Gastrocnemius medialis (tissue), 4 donors: ENCODE measurements at regions of chr1 and their contacts with region 1.

Region 1: GRCh38 chr1:85576642-85577418 is 3.7 kb upstream of the CCN1 start:
- DNase-seq: peak; percentile 66 to 78
- ATAC-seq: peak; percentile 44 to 63
- H3K4me3 ChIP-seq: peak overlapping the region; percentile 72 to 90 (median 80)
- H3K27ac ChIP-seq: peak overlapping the region; percentile 91 to 97 (median 94)
- H3K4me1 ChIP-seq: peaks cover 7 to 29% of the 10 kb centered on the region in 2 donors
- H3K27me3 ChIP-seq: no peaks in the 10 kb centered on the region
- CTCF ChIP-seq: peak; percentile 64 to 94 (median 86)
- POLR2A ChIP-seq: peak; percentile 73 to 83

Region 2: GRCh38 chr1:85200870-85201339 is 375.9 kb before region 1 on chr1 and contains the start of gene SYDE2:
- in situ Hi-C with region 1: no loop called
- intact Hi-C with region 1: loop called (anchors 2 kb)
- DNase-seq: peak; percentile 38 to 60
- ATAC-seq: peak; percentile 77 to 79
- H3K4me3 ChIP-seq: peak within 1 kb of the TSS; percentile 76 to 96 (median 78)
- H3K27ac ChIP-seq: peak within 1 kb of the TSS; percentile 86 to 95 (median 94)
- H3K4me1 ChIP-seq: peaks cover 11 to 17% of the 10 kb centered on the region in 2 donors
- H3K27me3 ChIP-seq: no peaks in the 10 kb centered on the region
- CTCF ChIP-seq: no peak
- POLR2A ChIP-seq: peak; percentile 41 to 60
- total RNA-seq, gene SYDE2: 3.8 to 7.2 (median 4.9) TPM

Region 3: DNA sequence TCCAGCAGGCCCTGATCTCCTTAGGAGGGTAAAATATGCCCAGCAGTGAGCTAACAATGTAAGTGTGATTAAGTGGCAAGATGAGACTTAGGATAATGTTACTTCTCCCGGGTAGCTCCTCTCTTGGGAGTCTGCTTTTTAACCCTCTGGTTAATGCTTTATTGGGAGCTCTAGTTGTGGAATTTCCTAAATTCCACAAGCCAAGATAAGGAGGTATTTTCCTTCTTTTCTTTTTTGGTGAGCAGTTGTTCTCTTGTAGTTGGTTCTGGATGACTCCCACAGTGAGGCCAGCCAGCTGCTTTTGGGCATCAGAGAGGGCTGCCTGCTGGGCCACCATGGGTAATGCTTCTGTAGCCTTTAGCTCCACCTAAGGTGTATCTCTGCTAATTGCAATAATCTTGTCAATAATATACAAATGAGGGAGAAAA is 336.6 kb before region 1 on chr1:
- in situ Hi-C with region 1: no loop called
- intact Hi-C with region 1: no loop called
- DNase-seq: no peak
- ATAC-seq: no peak
- H3K4me3 ChIP-seq: no peak overlapping the region
- H3K27ac ChIP-seq: no peak overlapping the region
- H3K4me1 ChIP-seq: peaks cover 12% of the 10 kb centered on the region in 2 donors
- H3K27me3 ChIP-seq: no peaks in the 10 kb centered on the region
- CTCF ChIP-seq: no peak
- POLR2A ChIP-seq: no peak

Region 4: DNA sequence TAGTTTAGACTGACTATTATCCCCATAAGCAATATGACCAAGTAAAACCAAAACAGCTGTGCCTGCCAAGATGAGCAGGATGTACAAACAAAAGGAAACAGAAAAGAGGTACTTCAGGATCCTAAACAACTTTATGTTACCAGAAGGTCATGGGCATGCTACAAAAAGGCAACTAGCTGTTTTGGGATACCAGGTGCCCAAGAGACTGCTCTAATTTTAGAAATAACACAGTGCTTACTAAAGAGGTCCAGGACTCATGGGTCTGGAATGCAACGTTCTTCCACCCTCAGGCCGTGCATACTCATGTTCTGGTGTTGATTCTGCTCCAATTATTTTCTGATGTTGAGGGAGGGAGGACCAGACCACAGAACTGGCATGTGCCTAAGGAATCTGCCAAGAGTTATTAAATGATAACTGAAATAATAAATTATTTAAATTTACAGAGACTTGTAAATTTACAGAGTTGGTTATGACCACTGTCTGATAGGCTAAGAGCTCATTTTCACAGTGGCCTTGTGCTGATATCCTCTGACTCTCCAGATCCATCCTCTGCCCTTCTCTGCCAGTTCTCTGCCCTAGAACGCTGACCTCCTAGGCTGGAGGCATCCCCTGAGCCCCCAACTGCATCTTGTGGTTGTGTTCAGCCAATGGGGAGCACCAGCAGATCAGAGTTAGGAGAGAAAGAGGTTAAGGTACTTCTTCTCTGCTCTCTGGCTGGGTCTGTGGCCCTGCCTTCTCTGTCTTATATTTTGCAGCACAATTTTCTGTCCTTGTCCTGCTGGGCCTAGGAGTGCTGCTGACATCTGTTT is 262.7 kb before region 1 on chr1:
- in situ Hi-C with region 1: loop called (anchors 10 kb)
- intact Hi-C with region 1: loop called (anchors 2 kb)
- DNase-seq: peak; percentile 59 to 68
- ATAC-seq: peak; percentile 96
- H3K4me3 ChIP-seq: no peak overlapping the region
- H3K27ac ChIP-seq: peak overlapping the region; percentile 83 to 90 (median 85)
- H3K4me1 ChIP-seq: peaks cover 29 to 32% of the 10 kb centered on the region in 2 donors
- H3K27me3 ChIP-seq: no peaks in the 10 kb centered on the region
- CTCF ChIP-seq: no peak
- POLR2A ChIP-seq: peak in 1 of 2 donors; percentile 10

Region 5: DNA sequence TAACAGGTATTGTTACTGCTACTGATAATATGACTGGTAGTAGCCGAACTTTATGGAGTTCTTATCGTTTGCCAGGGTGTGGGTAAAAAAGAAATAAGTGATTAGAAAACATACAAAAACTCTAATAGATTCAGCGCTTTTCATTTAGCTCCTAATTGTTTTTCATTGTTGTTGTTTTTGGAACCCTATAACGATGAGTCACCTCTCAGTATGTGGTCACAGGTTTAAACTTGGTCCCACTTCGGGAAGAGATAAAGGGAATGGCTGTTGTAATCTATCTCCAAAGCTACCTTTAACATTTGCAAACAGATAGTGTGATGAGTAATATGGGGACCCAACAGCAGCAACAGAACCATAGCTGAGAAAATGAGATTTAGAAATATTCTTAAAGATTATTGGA is 237.7 kb before region 1 on chr1:
- in situ Hi-C with region 1: no loop called
- intact Hi-C with region 1: loop called (anchors 2 kb)
- DNase-seq: no peak
- ATAC-seq: peak; percentile 55 to 65
- H3K4me3 ChIP-seq: no peak overlapping the region
- H3K27ac ChIP-seq: peak overlapping the region; percentile 61 to 82 (median 78)
- H3K4me1 ChIP-seq: peaks cover 41 to 47% of the 10 kb centered on the region in 2 donors
- H3K27me3 ChIP-seq: no peaks in the 10 kb centered on the region
- CTCF ChIP-seq: no peak
- POLR2A ChIP-seq: no peak

Region 6: GRCh38 chr1:85453640-85454194 is 123.1 kb before region 1 on chr1:
- in situ Hi-C with region 1: no loop called
- intact Hi-C with region 1: no loop called
- DNase-seq: no peak
- ATAC-seq: no peak
- H3K4me3 ChIP-seq: no peak overlapping the region
- H3K27ac ChIP-seq: no peak overlapping the region
- H3K4me1 ChIP-seq: peaks cover 4 to 22% of the 10 kb centered on the region in 2 donors
- H3K27me3 ChIP-seq: no peaks in the 10 kb centered on the region
- CTCF ChIP-seq: no peak
- POLR2A ChIP-seq: no peak

Region 7: GRCh38 chr1:85464497-85465098 is 112.2 kb before region 1 on chr1:
- in situ Hi-C with region 1: no loop called
- intact Hi-C with region 1: loop called (anchors 10 kb)
- DNase-seq: peak in 1 of 2 donors; percentile 30
- ATAC-seq: peak; percentile 77 to 79
- H3K4me3 ChIP-seq: peak overlapping the region; percentile 58 to 88 (median 64)
- H3K27ac ChIP-seq: peak overlapping the region; percentile 29 to 69 (median 58)
- H3K4me1 ChIP-seq: peaks cover under 1 to 6% of the 10 kb centered on the region in 2 donors
- H3K27me3 ChIP-seq: no peaks in the 10 kb centered on the region
- CTCF ChIP-seq: no peak
- POLR2A ChIP-seq: no peak

Region 8: GRCh38 chr1:85599076-85599491 is 22.3 kb after region 1 on chr1:
- in situ Hi-C with region 1: no loop called
- intact Hi-C with region 1: loop called (anchors 2 kb)
- DNase-seq: peak; percentile 75 to 83
- ATAC-seq: peak; percentile 92 to 95
- H3K4me3 ChIP-seq: no peak overlapping the region
- H3K27ac ChIP-seq: peak overlapping the region; percentile 70 to 80 (median 78)
- H3K4me1 ChIP-seq: peaks cover 21% of the 10 kb centered on the region in 2 donors
- H3K27me3 ChIP-seq: no peaks in the 10 kb centered on the region
- CTCF ChIP-seq: peak in 1 of 5 experiments; percentile 18
- POLR2A ChIP-seq: no peak

Region 9: DNA sequence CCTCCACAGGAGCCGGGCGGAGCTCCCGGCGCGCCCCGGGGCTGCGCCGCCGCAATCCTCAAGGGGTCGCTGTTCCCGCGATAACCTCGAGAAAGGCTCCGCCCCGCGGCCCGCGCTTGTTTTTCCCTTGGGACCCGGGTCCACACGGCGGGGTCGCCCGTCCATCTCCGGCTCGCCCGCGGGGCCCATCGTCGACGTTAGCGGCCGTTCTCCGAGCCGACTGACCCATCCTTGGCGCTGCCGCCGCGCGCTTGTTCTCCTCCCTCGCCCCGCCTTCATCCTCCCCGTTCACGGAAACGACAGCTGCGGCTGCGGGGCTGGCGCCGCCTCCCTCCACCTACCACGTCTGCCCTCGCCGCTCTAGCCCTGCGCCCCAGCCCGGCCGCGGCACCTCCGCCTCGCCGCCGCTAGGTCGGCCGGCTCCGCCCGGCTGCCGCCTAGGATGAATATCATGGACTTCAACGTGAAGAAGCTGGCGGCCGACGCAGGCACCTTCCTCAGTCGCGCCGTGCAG is 1127.7 kb after region 1 on chr1 and contains the start of gene SH3GLB1:
- in situ Hi-C with region 1: no loop called
- intact Hi-C with region 1: loop called (anchors 10 kb)
- DNase-seq: peak; percentile 73 to 85
- ATAC-seq: peak; percentile 74 to 75
- H3K4me3 ChIP-seq: peak within 1 kb of the TSS; percentile 70 to 89 (median 83)
- H3K27ac ChIP-seq: peak within 1 kb of the TSS; percentile 91 to 98 (median 97)
- H3K4me1 ChIP-seq: peaks cover 37 to 39% of the 10 kb centered on the region in 2 donors
- H3K27me3 ChIP-seq: no peaks in the 10 kb centered on the region
- CTCF ChIP-seq: peak; percentile 91 to 99 (median 95)
- POLR2A ChIP-seq: peak; percentile 79
- total RNA-seq, gene SH3GLB1: 76.6 to 168 (median 112) TPM